Calu3 (cell line): ENCODE measurements at regions of chr10 and their contacts with region 1.

Region 1: GRCh38 chr10:94320285-94320914 is 42.3 kb downstream of the NOC3L start:
- DNase-seq: peak; percentile 59
- H3K4me3 Mint-ChIP-seq: no peak overlapping the region
- H3K27ac Mint-ChIP-seq: no peak overlapping the region
- H3K4me1 Mint-ChIP-seq: no peaks in the 10 kb centered on the region
- H3K27me3 Mint-ChIP-seq: no peaks in the 10 kb centered on the region
- CTCF ChIP-seq: peak; percentile 52

Region 2: GRCh38 chr10:94279835-94280709 is 40.3 kb before region 1 on chr10:
- CTCF ChIA-PET with region 1: no interaction called
- intact Hi-C with region 1: loop called (anchors 1 kb)
- DNase-seq: peak; percentile 62
- H3K4me3 Mint-ChIP-seq: no peak overlapping the region
- H3K27ac Mint-ChIP-seq: no peak overlapping the region
- H3K4me1 Mint-ChIP-seq: no peaks in the 10 kb centered on the region
- H3K27me3 Mint-ChIP-seq: peaks cover 13% of the 10 kb centered on the region
- CTCF ChIP-seq: peak; percentile 66

Region 3: DNA sequence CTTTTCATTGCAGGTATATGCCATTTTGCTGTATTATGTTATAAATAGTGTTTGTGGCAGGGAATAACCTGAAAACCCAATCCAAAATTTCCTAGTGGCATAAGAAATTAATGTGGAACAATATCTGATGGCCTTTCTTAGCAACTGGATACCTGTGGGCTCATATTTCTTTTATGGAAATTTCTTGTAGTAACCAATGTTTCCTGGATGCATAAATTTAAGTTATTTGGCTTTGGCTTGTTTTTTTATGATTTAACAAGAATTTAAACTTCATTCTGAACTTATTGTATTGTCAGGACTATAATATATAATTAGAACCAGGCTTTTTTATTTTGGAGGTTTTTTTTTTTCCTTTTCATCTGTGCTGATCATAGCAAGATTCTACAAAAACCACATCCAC is 112.0 kb after region 1 on chr10:
- CTCF ChIA-PET with region 1: no interaction called
- intact Hi-C with region 1: no loop called
- DNase-seq: no peak
- H3K4me3 Mint-ChIP-seq: no peak overlapping the region
- H3K27ac Mint-ChIP-seq: no peak overlapping the region
- H3K4me1 Mint-ChIP-seq: no peaks in the 10 kb centered on the region
- H3K27me3 Mint-ChIP-seq: no peaks in the 10 kb centered on the region
- CTCF ChIP-seq: no peak